ENCODE measurements at regions of chr2 and their contacts with region 1.

Region 1: DNA sequence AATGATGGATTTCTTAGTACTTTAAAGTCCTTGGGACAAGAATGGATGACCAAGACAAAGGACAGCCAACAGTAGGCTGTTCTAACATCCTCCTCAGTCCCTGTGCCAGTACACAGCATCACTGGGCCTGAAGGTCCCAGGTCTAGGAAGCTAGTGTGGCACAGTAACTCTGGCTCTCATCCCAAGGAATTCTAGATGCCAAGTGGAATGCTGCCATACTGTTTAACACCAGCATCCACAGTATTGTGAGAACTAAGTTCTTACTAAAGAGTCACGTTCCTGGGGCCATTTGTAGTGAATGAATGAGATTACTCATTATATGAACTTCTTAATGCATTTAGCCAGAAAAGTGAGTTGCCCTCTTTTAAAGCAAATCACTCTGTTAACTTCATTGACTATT is 68.2 kb upstream of the LYPD1 start:
- DNase-seq: no peak
- H3K4me3 ChIP-seq: no peak overlapping the region
- H3K27ac ChIP-seq: no peak overlapping the region
- H3K4me1 ChIP-seq: no peaks in the 10 kb centered on the region
- CTCF ChIP-seq: no peak

Region 2: GRCh38 chr2:132790207-132790785 is 52.1 kb after region 1 on chr2:
- CTCF ChIA-PET with region 1: interaction called, 21 read pairs
- POLR2A ChIA-PET with region 1: no interaction called
- intact Hi-C with region 1: no loop called
- DNase-seq: no peak
- H3K4me3 ChIP-seq: no peak overlapping the region
- H3K27ac ChIP-seq: no peak overlapping the region
- H3K4me1 ChIP-seq: no peaks in the 10 kb centered on the region
- CTCF ChIP-seq: no peak

Measured in OCI-LY7 (cell line).